Posterior vena cava (tissue), 2 donors: ENCODE measurements at regions of chr15 and their contacts with region 1.

Region 1: DNA sequence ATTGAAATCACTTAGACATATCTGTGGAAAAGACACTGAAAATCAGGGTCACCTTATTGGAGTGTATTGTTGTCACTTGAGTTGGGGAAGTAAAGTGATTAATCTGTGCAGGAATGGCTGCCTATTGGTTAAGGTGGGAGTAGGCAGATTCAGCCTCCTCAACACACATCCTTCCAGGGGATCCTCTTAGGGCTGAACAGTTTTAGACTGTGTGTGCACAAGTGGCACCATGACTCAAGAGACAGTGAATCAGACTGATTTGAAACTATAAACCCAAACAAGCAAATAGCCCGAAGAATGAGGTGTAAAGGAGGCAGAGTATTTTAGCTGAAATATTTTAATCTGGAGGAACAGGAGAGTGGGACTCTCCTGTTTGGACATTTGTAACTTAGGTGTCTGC is 4.9 kb downstream of the ABHD17C start:
- DNase-seq: no peak

Region 2: DNA sequence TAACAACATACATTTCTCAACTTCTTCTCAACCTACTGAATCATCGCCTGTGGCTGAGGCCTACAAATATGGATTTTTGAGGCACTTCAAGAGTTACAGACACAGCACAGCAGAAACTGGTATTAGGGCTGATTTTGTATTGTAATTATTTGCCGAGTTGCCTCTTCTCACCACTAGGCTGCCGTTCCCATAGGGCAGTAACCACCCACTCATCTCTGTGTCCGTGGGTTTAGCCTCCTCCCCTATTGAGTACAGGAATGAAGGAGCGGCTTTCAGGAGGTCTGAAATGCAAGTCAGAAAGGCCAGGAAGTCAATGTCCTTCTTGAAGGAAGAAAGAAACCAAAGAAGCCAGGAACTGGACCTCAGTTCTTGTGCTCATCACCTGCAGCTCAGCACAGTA is 1024.0 kb before region 1 on chr15:
- intact Hi-C with region 1: loop called in 1 of 2 experiments (anchors 5 kb)
- DNase-seq: no peak

Region 3: GRCh38 chr15:81504170-81504905 is 804.4 kb after region 1 on chr15:
- intact Hi-C with region 1: no loop called
- DNase-seq: no peak

Region 4: DNA sequence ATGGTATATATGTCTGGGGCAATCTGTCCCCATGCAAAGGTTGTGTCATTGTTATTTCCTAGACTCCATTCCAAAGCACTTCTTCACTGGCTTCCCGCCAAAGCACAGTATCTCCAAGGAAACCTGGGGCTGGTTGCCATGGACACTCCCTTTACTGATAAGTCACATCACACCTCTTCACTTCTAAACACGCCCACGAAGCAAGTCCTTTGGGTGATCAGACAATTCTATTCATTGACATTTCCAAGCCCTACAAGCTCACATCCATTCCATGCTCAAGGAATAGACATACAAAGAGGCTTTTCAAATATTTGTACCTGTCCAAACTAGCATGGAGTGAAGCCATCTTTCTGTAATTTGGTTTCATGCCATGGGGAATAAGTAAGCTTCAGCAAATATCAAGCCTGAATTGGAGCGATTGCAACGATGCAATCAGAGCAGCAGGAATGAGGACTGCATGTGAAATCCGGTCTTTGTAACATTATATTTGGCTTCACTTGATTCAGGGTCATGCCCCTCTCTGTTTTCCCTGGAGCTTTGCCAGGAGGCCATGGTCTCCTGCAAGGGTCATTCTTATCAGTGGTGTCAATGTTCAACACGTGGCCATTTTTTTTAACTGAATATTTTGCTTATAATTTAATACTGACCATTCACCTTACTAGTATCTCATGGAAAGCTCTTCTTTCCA is 875.6 kb after region 1 on chr15:
- intact Hi-C with region 1: no loop called
- DNase-seq: no peak